PC-3 (cell line): ENCODE measurements at regions of chr5 and their contacts with region 1.

Region 1: GRCh38 chr5:108521841-108522506 is 140.1 kb upstream of the FBXL17 start:
- DNase-seq: peak; percentile 92
- ATAC-seq: peak; percentile 96
- H3K4me3 ChIP-seq: no peak overlapping the region
- H3K27ac ChIP-seq: no peak overlapping the region
- H3K4me1 ChIP-seq: no peaks in the 10 kb centered on the region
- H3K27me3 ChIP-seq: no peaks in the 10 kb centered on the region
- CTCF ChIP-seq: peak; percentile 94

Region 2: DNA sequence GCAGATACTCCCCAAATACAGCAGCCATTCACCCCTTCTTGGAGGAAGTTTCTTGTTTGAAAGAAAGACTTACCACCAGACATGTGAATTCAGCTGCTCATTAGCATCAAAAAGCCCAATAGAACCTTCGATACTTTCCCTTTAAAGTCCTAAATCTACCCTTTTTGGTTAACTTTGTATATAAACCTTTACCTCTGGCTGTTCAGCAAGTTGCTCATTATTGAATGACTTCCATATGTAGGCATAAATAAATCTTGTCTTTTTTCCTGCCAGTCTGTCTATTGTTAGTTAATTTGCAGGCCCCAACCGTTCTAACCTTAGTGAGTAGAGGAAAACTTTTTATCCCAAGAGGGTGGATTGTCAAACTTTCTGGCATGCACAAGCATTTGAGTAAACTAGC is 112.2 kb before region 1 on chr5:
- CTCF ChIA-PET with region 1: no interaction called
- POLR2A ChIA-PET with region 1: no interaction called
- intact Hi-C with region 1: no loop called
- DNase-seq: no peak
- ATAC-seq: no peak
- H3K4me3 ChIP-seq: no peak overlapping the region
- H3K27ac ChIP-seq: no peak overlapping the region
- H3K4me1 ChIP-seq: no peaks in the 10 kb centered on the region
- H3K27me3 ChIP-seq: no peaks in the 10 kb centered on the region
- CTCF ChIP-seq: no peak

Region 3: GRCh38 chr5:108481355-108481931 is 40.5 kb before region 1 on chr5:
- CTCF ChIA-PET with region 1: no interaction called
- POLR2A ChIA-PET with region 1: no interaction called
- intact Hi-C with region 1: loop called (anchors 1 kb)
- DNase-seq: peak; percentile 82
- ATAC-seq: peak; percentile 91
- H3K4me3 ChIP-seq: peak overlapping the region; percentile 22; the same call in 1 of the 2 replicates
- H3K27ac ChIP-seq: no peak overlapping the region
- H3K4me1 ChIP-seq: no peaks in the 10 kb centered on the region
- H3K27me3 ChIP-seq: peaks cover 20% of the 10 kb centered on the region
- CTCF ChIP-seq: peak; percentile 87

Region 4: GRCh38 chr5:108727651-108728565 is 205.9 kb after region 1 on chr5:
- CTCF ChIA-PET with region 1: no interaction called
- POLR2A ChIA-PET with region 1: no interaction called
- intact Hi-C with region 1: loop called (anchors 5 kb)
- DNase-seq: peak; percentile 90
- ATAC-seq: peak; percentile 100
- H3K4me3 ChIP-seq: peak overlapping the region; percentile 79
- H3K27ac ChIP-seq: peak overlapping the region; percentile 49
- H3K4me1 ChIP-seq: peaks cover 26% of the 10 kb centered on the region
- H3K27me3 ChIP-seq: no peaks in the 10 kb centered on the region
- CTCF ChIP-seq: no peak

Region 5: DNA sequence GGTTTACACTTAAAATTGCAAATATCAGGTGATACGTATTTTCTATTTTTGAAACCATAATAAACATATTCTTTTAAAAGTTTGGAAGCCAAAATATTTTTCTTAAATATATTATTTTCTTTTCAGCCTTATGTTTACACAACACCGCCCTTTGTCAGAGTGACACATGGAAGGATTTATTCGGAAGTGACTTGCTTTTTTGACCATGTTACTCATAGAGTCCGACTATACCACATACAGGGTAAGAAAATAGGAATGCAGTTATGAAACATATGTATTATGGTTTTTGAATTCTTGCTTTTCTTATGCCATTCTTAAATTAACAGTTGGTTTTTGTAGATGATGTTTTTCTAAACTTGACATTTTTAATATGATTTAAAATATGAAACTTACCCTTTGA is 1301.6 kb after region 1 on chr5:
- CTCF ChIA-PET with region 1: no interaction called
- POLR2A ChIA-PET with region 1: no interaction called
- intact Hi-C with region 1: loop called (anchors 1 kb)
- DNase-seq: peak; percentile 92
- ATAC-seq: peak; percentile 71
- H3K4me3 ChIP-seq: peak overlapping the region; percentile 39
- H3K27ac ChIP-seq: peak overlapping the region; percentile 89
- H3K4me1 ChIP-seq: peaks cover 50% of the 10 kb centered on the region
- H3K27me3 ChIP-seq: no peaks in the 10 kb centered on the region
- CTCF ChIP-seq: no peak

Region 6: GRCh38 chr5:109900911-109901627 is 1379.1 kb after region 1 on chr5:
- CTCF ChIA-PET with region 1: no interaction called
- POLR2A ChIA-PET with region 1: no interaction called
- intact Hi-C with region 1: loop called (anchors 2 kb)
- DNase-seq: peak; percentile 98
- ATAC-seq: peak; percentile 86
- H3K4me3 ChIP-seq: peak overlapping the region; percentile 39; the same call in 1 of the 2 replicates
- H3K27ac ChIP-seq: peak overlapping the region; percentile 94
- H3K4me1 ChIP-seq: peaks cover 43% of the 10 kb centered on the region
- H3K27me3 ChIP-seq: no peaks in the 10 kb centered on the region
- CTCF ChIP-seq: peak; percentile 39; the same call in 1 of the 2 replicates